ENCODE measurements at regions of chr9 and their contacts with region 1.

Region 1: GRCh38 chr9:130042833-130043653 is at the start of gene FNBP1:
- DNase-seq: peak; percentile 92
- H3K4me3 ChIP-seq: peak within 1 kb of the TSS; percentile 74 to 94 (median 84)
- H3K27ac ChIP-seq: peak within 1 kb of the TSS; percentile 94 to 99 (median 96)
- H3K4me1 ChIP-seq: peaks cover 0 to 55% (median 48%) of the 10 kb centered on the region in 4 donors
- H3K27me3 ChIP-seq: no peaks in the 10 kb centered on the region
- CTCF ChIP-seq: no peak
- EP300 ChIP-seq: no peak
- POLR2A ChIP-seq: peak; percentile 76 to 77
- total RNA-seq, gene FNBP1: 92.8 to 172 (median 104) TPM

Region 2: DNA sequence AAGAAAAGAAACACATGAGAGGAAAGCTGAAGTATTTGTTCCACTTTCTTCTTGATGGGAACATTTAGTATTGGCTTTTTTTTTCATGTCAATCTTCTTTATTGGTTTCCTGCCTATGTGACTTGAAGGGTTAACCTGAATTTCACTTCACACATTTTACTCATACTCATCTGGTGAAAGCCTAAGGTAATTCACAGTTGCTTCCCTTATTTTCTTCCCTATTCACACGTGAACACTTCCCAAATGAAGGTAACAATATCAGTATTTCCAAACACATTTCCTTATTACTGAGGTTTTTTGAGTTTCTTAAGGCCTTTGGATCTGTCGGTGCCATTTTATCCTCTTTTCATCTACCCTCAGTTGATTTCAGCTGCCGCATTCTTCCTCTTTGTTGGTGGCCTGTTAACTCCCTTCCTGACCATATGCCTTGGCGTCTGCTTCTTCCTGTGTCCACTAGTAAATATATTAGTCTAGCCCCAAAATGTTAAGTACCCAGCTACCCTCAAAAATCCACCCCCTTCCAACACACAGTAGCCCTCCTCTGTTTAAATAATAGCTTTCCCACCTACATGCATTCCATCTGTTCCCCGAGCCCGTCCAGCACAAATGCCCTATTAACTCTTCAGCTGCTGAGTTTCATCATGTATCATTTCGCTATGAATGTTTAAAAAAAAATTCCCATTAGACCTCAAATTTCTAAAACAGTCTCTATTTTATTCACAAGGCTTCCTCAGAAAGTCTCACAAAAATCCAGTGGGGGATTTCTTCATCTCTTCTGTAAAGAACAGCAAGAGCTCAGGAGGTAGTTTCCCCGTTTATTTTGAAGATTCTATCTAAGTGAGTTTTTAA is 110.5 kb before region 1 on chr9:
- intact Hi-C with region 1: loop called (anchors 5 kb)
- DNase-seq: no peak
- H3K4me3 ChIP-seq: peak overlapping the region in 3 of 4 donors; percentile 2 to 6 (median 4)
- H3K27ac ChIP-seq: peak overlapping the region; percentile 75 to 88 (median 82)
- H3K4me1 ChIP-seq: peaks cover 0 to 67% (median 53%) of the 10 kb centered on the region in 4 donors
- H3K27me3 ChIP-seq: no peaks in the 10 kb centered on the region
- CTCF ChIP-seq: no peak
- EP300 ChIP-seq: no peak
- POLR2A ChIP-seq: no peak

Region 3: DNA sequence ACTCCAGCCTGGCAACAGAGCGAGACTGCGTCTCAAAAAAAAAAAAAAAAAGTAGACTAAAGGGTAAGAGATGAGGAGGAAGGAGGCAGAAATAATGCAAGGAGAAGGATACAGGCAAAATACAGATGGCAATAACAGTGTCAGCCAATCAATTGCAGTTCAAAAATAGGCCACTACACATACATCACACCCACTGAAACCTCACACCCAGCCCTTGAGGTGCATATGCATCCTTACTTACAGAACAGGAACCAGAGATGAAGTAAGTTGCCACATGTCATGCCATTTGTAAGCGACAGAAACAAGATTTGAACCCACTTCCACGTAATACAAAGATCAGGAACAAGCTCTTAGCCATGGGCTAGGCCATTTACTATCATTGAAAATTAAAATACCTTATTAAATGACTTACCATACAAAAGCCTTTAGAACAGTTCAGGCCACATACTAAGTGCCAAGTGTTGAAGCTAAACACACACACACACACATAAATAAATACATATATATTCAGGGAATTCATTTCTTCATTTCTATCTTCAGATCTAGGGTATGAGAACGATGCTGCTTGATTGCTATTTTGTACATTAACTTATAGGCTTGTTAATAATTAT is 98.4 kb before region 1 on chr9:
- intact Hi-C with region 1: loop called (anchors 5 kb)
- DNase-seq: no peak
- H3K4me3 ChIP-seq: no peak overlapping the region
- H3K27ac ChIP-seq: peak overlapping the region; percentile 81 to 88 (median 83)
- H3K4me1 ChIP-seq: peaks cover 3 to 68% (median 51%) of the 10 kb centered on the region in 4 donors
- H3K27me3 ChIP-seq: no peaks in the 10 kb centered on the region
- CTCF ChIP-seq: no peak
- EP300 ChIP-seq: no peak
- POLR2A ChIP-seq: no peak

Region 4: DNA sequence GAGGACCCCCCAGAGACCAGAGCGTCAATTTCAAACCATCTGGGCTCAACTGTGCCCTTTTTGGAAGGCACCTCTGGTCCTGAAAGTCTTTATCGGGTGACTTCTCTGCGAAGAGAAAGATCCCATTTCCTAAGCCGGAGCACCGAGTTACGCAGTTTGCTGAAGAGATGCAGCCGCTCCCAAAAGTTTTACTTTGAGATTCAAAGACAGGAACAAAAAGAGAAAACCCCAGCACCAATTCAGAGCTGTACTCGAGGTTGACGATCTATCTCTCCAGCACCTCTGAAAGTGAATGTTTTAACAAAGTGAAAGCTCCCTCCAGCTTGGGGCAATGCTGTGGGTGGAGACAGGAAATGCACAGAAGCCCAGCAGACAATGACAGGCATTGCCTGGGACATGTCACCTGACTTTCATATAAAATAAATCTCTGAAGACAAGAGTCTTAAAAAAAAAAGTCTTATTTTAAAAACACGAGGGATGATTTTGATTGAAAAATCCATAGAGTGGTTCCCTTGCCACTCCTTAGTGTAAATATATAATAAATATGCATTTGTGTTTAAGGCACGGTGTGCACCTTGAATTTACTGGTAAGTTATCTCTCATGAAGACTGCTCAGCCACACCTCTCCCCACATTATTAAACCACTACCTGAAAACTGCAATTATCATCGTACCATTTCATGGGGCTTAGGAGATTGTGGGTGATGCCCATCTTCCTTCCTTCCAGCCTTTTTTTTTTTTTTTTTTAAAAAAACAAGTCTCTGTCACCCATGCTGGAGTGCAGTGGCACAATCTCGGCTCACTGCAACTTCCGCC is 79.9 kb before region 1 on chr9:
- intact Hi-C with region 1: loop called (anchors 5 kb)
- DNase-seq: peak; percentile 86
- H3K4me3 ChIP-seq: peak overlapping the region; percentile 32 to 53 (median 46)
- H3K27ac ChIP-seq: peak overlapping the region; percentile 88 to 94 (median 91)
- H3K4me1 ChIP-seq: peaks cover 0 to 70% (median 58%) of the 10 kb centered on the region in 4 donors
- H3K27me3 ChIP-seq: no peaks in the 10 kb centered on the region
- CTCF ChIP-seq: no peak
- EP300 ChIP-seq: no peak
- POLR2A ChIP-seq: peak; percentile 53 to 57

Measured in sigmoid colon (tissue), 7 donors.